ENCODE measurements at regions of chr17 and their contacts with region 1.

Region 1: DNA sequence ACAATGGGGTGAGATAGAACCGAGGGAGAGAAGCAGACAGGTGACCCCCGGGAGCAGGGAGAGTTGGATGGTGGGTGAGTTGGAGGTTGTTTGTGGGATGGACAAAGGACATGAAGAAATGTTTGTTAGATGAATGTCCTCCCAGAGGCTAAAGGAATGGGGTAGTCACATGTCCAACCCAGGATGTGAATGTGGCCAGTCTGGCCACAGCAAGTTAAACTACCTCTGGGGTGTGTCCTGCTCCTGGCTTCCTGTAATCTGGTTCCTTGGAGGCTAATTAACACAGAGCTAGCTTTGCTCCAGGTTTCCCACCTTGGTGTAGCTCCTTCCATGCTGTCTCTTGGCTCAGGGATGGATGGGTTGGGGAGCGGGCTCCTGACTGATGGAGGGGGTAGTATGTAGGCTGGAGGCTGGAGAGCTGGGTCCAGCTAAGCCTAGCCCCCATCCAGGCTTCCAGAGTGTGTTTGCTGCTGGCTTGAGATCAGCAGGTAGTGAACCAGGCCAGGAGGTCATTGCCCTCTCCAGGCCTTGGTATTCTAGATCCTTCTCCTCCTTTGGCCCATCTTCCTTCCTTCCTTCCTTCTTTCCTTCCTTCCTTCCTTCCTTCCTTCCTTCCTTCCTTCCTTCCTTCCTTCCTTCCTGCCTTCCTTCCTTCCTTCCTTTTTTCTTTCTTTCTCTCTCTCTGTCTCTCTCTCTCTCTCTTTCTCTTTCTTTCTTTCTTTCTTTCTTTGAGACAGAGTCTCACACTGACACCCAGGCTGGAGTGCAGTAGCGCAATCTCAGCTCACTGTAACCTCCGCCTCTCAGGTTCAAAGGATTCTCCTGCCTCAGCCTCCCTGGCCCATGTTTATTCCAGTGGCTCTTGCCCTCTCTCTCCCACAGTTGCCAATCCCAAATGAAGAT is 28.0 kb upstream of the UBE2G1 start:
- DNase-seq: no peak
- ATAC-seq: no peak
- H3K4me3 ChIP-seq: no peak overlapping the region
- H3K4me3 Mint-ChIP-seq: peak overlapping the region; percentile 33
- H3K27ac ChIP-seq: no peak overlapping the region
- H3K27ac Mint-ChIP-seq: peak overlapping the region; percentile 74
- H3K4me1 ChIP-seq: peaks cover 32 to 52% of the 10 kb centered on the region in 2 donors
- H3K4me1 Mint-ChIP-seq: peaks cover 42% of the 10 kb centered on the region
- H3K27me3 ChIP-seq: no peaks in the 10 kb centered on the region
- H3K27me3 Mint-ChIP-seq: no peaks in the 10 kb centered on the region
- CTCF ChIP-seq: no peak

Region 2: GRCh38 chr17:4366327-4367063 is 28.0 kb before region 1 on chr17 and contains the start of gene UBE2G1:
- CTCF ChIA-PET with region 1: interaction called, 3 read pairs
- POLR2A ChIA-PET with region 1: interaction called, 19 read pairs
- intact Hi-C with region 1: loop called (anchors 1 kb)
- DNase-seq: peak; percentile 99
- ATAC-seq: peak; percentile 81
- H3K4me3 ChIP-seq: peak within 1 kb of the TSS; percentile 50 to 97 (median 90)
- H3K4me3 Mint-ChIP-seq: peak within 1 kb of the TSS; percentile 87
- H3K27ac ChIP-seq: peak within 1 kb of the TSS; percentile 63 to 89
- H3K27ac Mint-ChIP-seq: peak within 1 kb of the TSS; percentile 93
- H3K4me1 ChIP-seq: peaks cover 10 to 34% of the 10 kb centered on the region in 2 donors
- H3K4me1 Mint-ChIP-seq: peaks cover 44% of the 10 kb centered on the region
- H3K27me3 ChIP-seq: no peaks in the 10 kb centered on the region
- H3K27me3 Mint-ChIP-seq: no peaks in the 10 kb centered on the region
- CTCF ChIP-seq: no peak
- total RNA-seq, gene UBE2G1: 76.0 and 78.1 TPM in 2 replicates

Region 3: GRCh38 chr17:4375039-4375748 is 19.3 kb before region 1 on chr17:
- CTCF ChIA-PET with region 1: interaction called, 5 read pairs
- POLR2A ChIA-PET with region 1: interaction called, 14 read pairs
- intact Hi-C with region 1: loop called (anchors 1 kb)
- DNase-seq: peak; percentile 85
- ATAC-seq: peak; percentile 89
- H3K4me3 ChIP-seq: peak overlapping the region in 3 of 5 experiments; percentile 5 to 17 (median 15)
- H3K4me3 Mint-ChIP-seq: peak overlapping the region; percentile 66
- H3K27ac ChIP-seq: peak overlapping the region; percentile 84 to 95
- H3K27ac Mint-ChIP-seq: peak overlapping the region; percentile 86
- H3K4me1 ChIP-seq: peaks cover 16 to 44% of the 10 kb centered on the region in 2 donors
- H3K4me1 Mint-ChIP-seq: peaks cover 35% of the 10 kb centered on the region
- H3K27me3 ChIP-seq: no peaks in the 10 kb centered on the region
- H3K27me3 Mint-ChIP-seq: no peaks in the 10 kb centered on the region
- CTCF ChIP-seq: no peak

Region 4: DNA sequence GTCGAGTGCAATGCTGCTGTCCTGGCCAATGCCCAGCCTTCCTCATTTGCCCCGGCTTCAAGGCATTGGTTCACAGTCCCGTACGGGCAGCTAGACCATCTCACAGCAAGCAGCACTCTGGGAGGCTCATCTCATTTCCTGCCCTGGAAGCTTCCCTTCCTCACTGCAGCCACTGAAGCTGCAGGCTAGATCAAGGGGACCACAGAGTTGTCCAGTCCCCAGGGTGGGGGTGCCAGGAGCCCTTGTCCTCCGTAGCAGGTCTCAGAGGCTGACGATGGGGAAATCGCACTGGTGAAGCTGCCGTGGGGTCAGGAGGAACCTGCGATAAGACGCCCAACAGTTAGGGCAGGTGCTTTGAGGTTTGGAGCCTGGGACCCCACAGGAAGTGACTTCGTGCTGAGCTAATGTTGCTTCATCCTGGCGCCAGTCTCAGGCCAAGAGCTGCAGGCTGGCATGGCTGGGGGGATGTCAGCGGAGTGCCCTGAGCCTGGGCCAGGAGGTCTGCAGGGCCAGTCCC is 39.1 kb after region 1 on chr17 and contains the start of gene SPNS3:
- CTCF ChIA-PET with region 1: no interaction called
- POLR2A ChIA-PET with region 1: no interaction called
- intact Hi-C with region 1: no loop called
- DNase-seq: peak; percentile 48
- ATAC-seq: peak; percentile 49
- H3K4me3 ChIP-seq: peak within 1 kb of the TSS in 4 of 5 experiments; percentile 10 to 31 (median 31)
- H3K4me3 Mint-ChIP-seq: peak within 1 kb of the TSS; percentile 70
- H3K27ac ChIP-seq: no peak within 1 kb of the TSS
- H3K27ac Mint-ChIP-seq: no peak within 1 kb of the TSS
- H3K4me1 ChIP-seq: peaks cover 9 to 19% of the 10 kb centered on the region in 2 donors
- H3K4me1 Mint-ChIP-seq: peaks cover 18% of the 10 kb centered on the region
- H3K27me3 ChIP-seq: peaks cover 0 to 8% (median 0%) of the 10 kb centered on the region in 4 experiments
- H3K27me3 Mint-ChIP-seq: no peaks in the 10 kb centered on the region
- CTCF ChIP-seq: no peak
- total RNA-seq, gene SPNS3: 0.17 and 0.44 TPM in 2 replicates